Heart left ventricle (tissue), 16 donors: ENCODE measurements at regions of chr3 and their contacts with region 1.

Region 1: GRCh38 chr3:188230962-188231361 is 77.0 kb downstream of the LPP start:
- DNase-seq: peak in 2 of 5 donors; percentile 50 to 70
- ATAC-seq: peak; percentile 88 to 94 (median 93)
- H3K4me3 ChIP-seq: no peak overlapping the region
- H3K27ac ChIP-seq: peak overlapping the region; percentile 42 to 89 (median 76)
- H3K4me1 ChIP-seq: peaks cover 0 to 58% (median 21%) of the 10 kb centered on the region in 12 donors
- H3K27me3 ChIP-seq: no peaks in the 10 kb centered on the region
- CTCF ChIP-seq: no peak
- POLR2A ChIP-seq: peak in 1 of 2 donors; percentile 42

Region 2: GRCh38 chr3:188212308-188212969 is 18.5 kb before region 1 on chr3:
- intact Hi-C with region 1: loop called in 1 of 10 experiments (anchors 2 kb)
- DNase-seq: no peak
- ATAC-seq: no peak
- H3K4me3 ChIP-seq: peak overlapping the region in 1 of 12 donors; percentile 23
- H3K27ac ChIP-seq: peak overlapping the region in 11 of 12 donors; percentile 0 to 89 (median 39)
- H3K4me1 ChIP-seq: peaks cover 0 to 76% (median 43%) of the 10 kb centered on the region in 12 donors
- H3K27me3 ChIP-seq: no peaks in the 10 kb centered on the region
- CTCF ChIP-seq: no peak
- POLR2A ChIP-seq: no peak